ENCODE measurements at regions of chrX and their contacts with region 1.

Region 1: GRCh38 chrX:120419463-120419862 is 49.6 kb downstream of the LAMP2 start:
- DNase-seq: peak; percentile 10 to 34 (median 20)
- H3K4me3 ChIP-seq: no peak overlapping the region
- H3K4me3 Mint-ChIP-seq: peak overlapping the region in 7 of 8 donors; percentile 22 to 65 (median 40)
- H3K27ac ChIP-seq: peak overlapping the region; percentile 19
- H3K27ac Mint-ChIP-seq: peak overlapping the region in 6 of 7 donors; percentile 63 to 90 (median 78)
- H3K4me1 ChIP-seq: peaks cover 28% of the 10 kb centered on the region
- H3K4me1 Mint-ChIP-seq: peaks cover 5 to 28% (median 14%) of the 10 kb centered on the region in 4 donors
- H3K27me3 ChIP-seq: no peaks in the 10 kb centered on the region
- H3K27me3 Mint-ChIP-seq: no peaks in the 10 kb centered on the region

Region 2: GRCh38 chrX:120380699-120381098 is 38.8 kb before region 1 on chrX:
- CTCF ChIA-PET with region 1: no interaction called
- POLR2A ChIA-PET with region 1: no interaction called
- intact Hi-C with region 1: loop called (anchors 1 kb)
- DNase-seq: peak; percentile 39 to 54 (median 47)
- H3K4me3 ChIP-seq: no peak overlapping the region
- H3K4me3 Mint-ChIP-seq: no peak overlapping the region
- H3K27ac ChIP-seq: no peak overlapping the region
- H3K27ac Mint-ChIP-seq: no peak overlapping the region
- H3K4me1 ChIP-seq: no peaks in the 10 kb centered on the region
- H3K4me1 Mint-ChIP-seq: peaks cover 0 to 7% (median 4%) of the 10 kb centered on the region in 4 donors
- H3K27me3 ChIP-seq: no peaks in the 10 kb centered on the region
- H3K27me3 Mint-ChIP-seq: peaks cover 0 to 1% of the 10 kb centered on the region in 2 donors

Measured in CD4-positive, alpha-beta memory T cell (primary cell).